Panc1 (cell line): ENCODE measurements at regions of chr10 and their contacts with region 1.

Region 1: DNA sequence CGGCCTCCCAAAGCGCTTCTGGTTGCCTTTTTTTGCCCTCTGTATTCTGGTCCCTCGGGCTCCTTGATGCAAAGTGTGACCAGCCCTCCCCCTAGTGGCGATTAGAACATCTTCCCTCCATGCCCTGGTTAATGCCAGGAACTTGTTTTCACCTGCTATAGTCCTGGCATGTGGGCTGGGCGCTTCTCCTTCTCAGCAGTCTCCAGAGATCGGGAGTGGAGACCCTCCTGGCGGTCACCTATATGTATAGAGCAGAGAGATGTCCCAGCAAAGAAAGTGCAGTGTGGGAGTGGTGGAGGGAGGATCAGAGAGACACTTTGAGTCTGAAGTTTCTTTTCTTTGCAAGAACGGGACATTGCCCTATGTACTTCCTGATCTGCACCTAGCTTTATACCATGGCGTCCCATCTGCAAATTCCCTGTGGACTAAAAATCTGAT is 264.1 kb downstream of the OTUD1 start:
- DNase-seq: peak; percentile 24
- ATAC-seq: peak; percentile 89
- H3K4me3 ChIP-seq: no peak overlapping the region
- H3K27ac ChIP-seq: no peak overlapping the region
- H3K4me1 ChIP-seq: no peaks in the 10 kb centered on the region
- H3K27me3 ChIP-seq: no peaks in the 10 kb centered on the region
- CTCF ChIP-seq: peak; percentile 80

Region 2: DNA sequence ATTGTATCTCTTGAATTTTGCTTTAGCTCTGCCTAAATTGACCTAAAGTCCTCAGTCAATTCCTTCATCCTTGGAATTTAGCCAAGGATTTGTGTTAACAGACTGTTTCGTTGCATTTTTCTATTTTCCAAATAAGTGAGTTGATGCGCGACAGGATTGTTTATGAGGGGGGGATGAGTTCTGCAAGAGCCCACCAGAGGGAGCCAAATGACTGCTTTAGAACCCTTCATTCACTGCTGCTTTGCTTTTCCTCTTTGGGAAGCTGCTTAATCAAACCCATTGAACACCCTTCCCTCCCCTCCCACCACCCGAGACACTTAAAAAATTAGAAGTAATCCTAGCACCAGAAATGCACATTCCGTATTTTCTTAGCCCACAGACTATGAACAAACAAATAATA is 544.6 kb before region 1 on chr10:
- CTCF ChIA-PET with region 1: no interaction called
- POLR2A ChIA-PET with region 1: no interaction called
- in situ Hi-C with region 1: no loop called
- intact Hi-C with region 1: loop called (anchors 10 kb)
- DNase-seq: peak; percentile 39
- ATAC-seq: peak; percentile 88
- H3K4me3 ChIP-seq: no peak overlapping the region
- H3K27ac ChIP-seq: no peak overlapping the region
- H3K4me1 ChIP-seq: 0 out of 2 replicates have a peak, but pooled peaks cover 3% of the 10 kb centered on the region
- H3K27me3 ChIP-seq: no peaks in the 10 kb centered on the region
- CTCF ChIP-seq: peak; percentile 82

Region 3: DNA sequence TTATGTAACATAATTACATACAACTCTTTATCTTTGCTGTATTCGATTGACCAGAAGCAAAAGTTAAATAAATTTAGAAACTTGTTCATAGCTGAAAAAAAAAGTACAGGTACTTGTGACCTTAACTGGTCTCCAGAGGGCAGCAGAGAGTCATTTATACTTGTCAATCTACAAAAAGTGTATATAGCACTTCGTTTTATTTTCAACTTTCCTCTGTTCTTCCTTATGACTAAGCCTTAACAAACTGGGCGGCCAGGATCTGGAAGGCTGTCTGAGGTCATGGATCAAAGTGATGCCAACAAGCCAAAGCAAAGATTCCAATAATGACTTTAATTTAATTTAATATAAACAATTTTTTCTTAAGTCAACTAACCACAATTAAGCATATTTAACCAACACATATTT is 388.2 kb before region 1 on chr10:
- CTCF ChIA-PET with region 1: no interaction called
- POLR2A ChIA-PET with region 1: no interaction called
- in situ Hi-C with region 1: no loop called
- intact Hi-C with region 1: loop called (anchors 2 kb)
- DNase-seq: no peak
- ATAC-seq: no peak
- H3K4me3 ChIP-seq: no peak overlapping the region
- H3K27ac ChIP-seq: no peak overlapping the region
- H3K4me1 ChIP-seq: no peaks in the 10 kb centered on the region
- H3K27me3 ChIP-seq: peaks cover 2% of the 10 kb centered on the region; the same call in 1 of the 2 replicates
- CTCF ChIP-seq: peak; percentile 60; the same call in 1 of the 2 replicates

Region 4: DNA sequence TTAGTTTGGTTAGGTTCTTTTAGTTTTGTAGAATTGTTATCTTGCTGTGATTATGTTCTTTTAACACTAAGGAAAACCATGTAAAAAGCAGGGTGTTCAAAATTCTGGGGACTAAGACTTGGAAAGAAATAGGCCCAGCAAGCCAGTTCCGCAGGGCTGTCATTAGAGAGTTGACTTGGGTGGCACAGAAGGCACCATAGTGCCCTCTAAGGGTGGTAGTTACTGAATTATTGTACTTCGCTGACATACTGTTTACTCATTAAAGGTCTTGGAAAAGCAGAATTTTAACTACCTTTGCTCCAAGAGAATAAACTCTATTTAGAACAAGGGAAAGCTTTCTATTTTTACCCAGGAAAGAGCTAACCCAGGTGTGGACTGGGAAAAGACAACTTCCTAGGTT is 177.6 kb before region 1 on chr10:
- CTCF ChIA-PET with region 1: no interaction called
- POLR2A ChIA-PET with region 1: no interaction called
- in situ Hi-C with region 1: no loop called
- intact Hi-C with region 1: loop called (anchors 10 kb)
- DNase-seq: no peak
- ATAC-seq: no peak; the same call in 1 of the 2 replicates
- H3K4me3 ChIP-seq: no peak overlapping the region
- H3K27ac ChIP-seq: no peak overlapping the region
- H3K4me1 ChIP-seq: no peaks in the 10 kb centered on the region
- H3K27me3 ChIP-seq: no peaks in the 10 kb centered on the region
- CTCF ChIP-seq: peak; percentile 51